ENCODE measurements at regions of chr2 and their contacts with region 1.

Region 1: GRCh38 chr2:57509189-57509588 is 537.4 kb upstream of the VRK2 start:
- DNase-seq: peak in 1 of 3 donors; percentile 40
- H3K4me3 ChIP-seq: no peak overlapping the region
- H3K27ac ChIP-seq: no peak overlapping the region
- H3K4me1 ChIP-seq: peaks cover 0 to 3% (median 0%) of the 10 kb centered on the region in 4 experiments
- H3K27me3 ChIP-seq: no peaks in the 10 kb centered on the region

Region 2: DNA sequence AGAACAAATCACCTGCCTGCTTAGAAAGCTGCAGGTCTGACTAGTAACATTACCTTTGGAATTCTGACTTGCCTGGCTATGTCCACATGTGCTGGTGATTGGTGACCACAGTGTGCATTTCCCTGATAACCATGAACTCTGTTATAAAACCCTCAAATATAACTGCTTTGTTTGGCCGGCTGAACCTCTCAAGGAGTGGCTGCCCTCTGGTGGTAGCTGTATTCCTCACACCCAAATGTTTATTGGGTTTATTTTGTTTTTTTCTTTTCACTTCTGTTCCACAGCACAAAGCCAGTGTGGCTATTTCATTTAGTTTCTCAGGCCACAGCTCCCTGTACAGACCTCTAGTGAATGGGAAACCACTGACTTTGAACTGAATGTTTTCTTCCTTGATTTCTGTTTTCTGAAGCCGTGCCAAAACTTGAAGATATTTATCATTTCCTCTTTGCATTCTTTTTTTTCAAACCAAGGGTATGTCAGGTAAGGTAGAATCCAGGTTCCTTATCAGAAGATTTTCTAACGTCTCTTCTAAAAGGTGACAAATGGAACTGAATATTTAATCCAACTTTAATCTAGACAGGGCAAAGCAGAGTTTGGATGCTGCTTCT is 11.6 kb before region 1 on chr2:
- CTCF ChIA-PET with region 1: interaction called, 19 read pairs
- POLR2A ChIA-PET with region 1: interaction called, 3 read pairs
- DNase-seq: peak; percentile 53 to 73 (median 68)
- H3K4me3 ChIP-seq: no peak overlapping the region
- H3K27ac ChIP-seq: no peak overlapping the region
- H3K4me1 ChIP-seq: peaks cover 0 to 6% (median 0%) of the 10 kb centered on the region in 4 experiments
- H3K27me3 ChIP-seq: no peaks in the 10 kb centered on the region

Measured in common myeloid progenitor, CD34-positive (primary cell).